Dorsolateral prefrontal cortex (tissue), 120 donors: ENCODE measurements at regions of chr10 and their contacts with region 1.

Region 1: DNA sequence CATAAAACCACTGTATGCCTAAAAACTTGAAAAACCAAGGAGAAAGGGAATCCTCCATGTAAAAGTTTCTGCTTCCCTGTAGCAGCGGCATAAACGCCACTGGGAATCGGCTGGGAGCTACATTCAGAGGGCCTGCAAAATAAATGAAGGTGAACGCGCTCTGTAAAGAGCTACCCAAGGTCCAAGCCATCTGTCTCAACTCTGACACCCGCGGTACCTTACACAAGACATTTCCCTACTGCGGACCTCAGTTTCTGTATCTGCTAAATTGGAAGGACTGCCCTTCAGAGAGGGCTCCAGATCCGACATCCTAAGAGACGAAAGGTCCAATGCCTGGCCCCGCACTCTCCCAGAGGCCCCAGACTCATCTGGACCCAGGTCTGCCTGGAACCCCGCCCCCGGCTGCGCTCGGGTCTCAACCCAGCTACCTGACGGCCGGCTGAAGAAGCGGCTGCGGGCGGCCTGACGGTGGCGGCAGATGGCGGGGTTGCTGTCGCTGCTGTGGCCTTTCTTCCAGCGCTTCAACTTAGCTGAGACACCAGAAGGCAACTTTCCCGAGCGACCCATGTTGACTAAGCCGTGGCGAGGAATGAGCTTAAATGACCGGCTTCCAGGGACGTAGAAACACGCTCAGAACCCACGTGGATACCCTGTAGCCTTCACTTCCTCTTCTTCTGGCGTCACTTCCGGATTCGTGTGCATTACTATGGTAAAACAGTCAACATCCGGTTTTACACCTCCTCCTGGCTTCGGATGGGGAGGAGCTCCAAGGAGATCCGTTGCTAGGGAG is at the start of gene RRP12:
- DNase-seq: peak; percentile 42 to 95 (median 86)
- H3K4me3 ChIP-seq: peak within 1 kb of the TSS; percentile 63 to 98 (median 88)
- H3K27ac ChIP-seq: peak within 1 kb of the TSS in 46 of 59 donors; percentile 2 to 82 (median 58)
- H3K27me3 ChIP-seq: no peaks in the 10 kb centered on the region
- CTCF ChIP-seq: peak in 27 of 56 donors; percentile 7 to 47 (median 23)
- total RNA-seq, gene RRP12: 21.1 to 88.1 (median 42.7) TPM

Region 2: GRCh38 chr10:96586419-96587263 is 814.2 kb before region 1 on chr10 and contains the start of gene TM9SF3:
- intact Hi-C with region 1: loop called in 1 of 2 experiments (anchors 10 kb)
- DNase-seq: peak; percentile 78 to 94 (median 88)
- H3K4me3 ChIP-seq: peak within 1 kb of the TSS; percentile 62 to 99 (median 92)
- H3K27ac ChIP-seq: peak within 1 kb of the TSS; percentile 55 to 98 (median 94)
- H3K27me3 ChIP-seq: no peaks in the 10 kb centered on the region
- CTCF ChIP-seq: peak in 12 of 56 donors; percentile 4 to 26 (median 12)
- total RNA-seq, gene TM9SF3: 52.7 to 101 (median 73.9) TPM

Region 3: DNA sequence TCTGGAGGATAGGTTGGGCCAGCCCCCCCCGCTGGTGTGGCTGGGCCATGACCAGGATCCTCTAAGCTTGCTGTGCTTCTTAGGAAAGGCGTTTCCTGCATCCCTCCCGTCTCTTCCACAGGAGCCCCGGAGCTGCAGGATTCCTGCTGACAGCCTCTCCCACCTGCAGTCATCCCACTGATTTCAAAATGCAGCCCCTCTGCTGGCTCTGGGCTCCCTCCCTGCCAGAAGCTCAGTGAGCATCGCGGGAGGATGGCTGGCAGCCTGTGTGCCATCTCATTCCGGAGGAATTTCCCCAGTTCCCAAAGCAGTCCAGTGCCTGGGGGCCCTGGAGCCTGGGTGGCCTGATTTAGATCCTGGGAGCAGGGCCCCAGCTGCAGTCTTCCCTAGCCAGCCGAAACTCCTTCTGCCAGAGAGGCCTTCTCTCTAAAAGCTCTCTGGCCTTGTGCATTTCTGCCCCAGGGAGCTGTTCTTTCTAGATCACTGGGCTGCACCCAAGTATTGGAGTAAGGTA is 427.0 kb after region 1 on chr10:
- intact Hi-C with region 1: no loop called
- DNase-seq: no peak
- H3K4me3 ChIP-seq: no peak overlapping the region
- H3K27ac ChIP-seq: peak overlapping the region in 26 of 59 donors; percentile 6 to 75 (median 44)
- H3K27me3 ChIP-seq: no peaks in the 10 kb centered on the region
- CTCF ChIP-seq: no peak